Brain microvascular endothelial cell (primary cell): ENCODE measurements at regions of chr4 and their contacts with region 1.

Region 1: DNA sequence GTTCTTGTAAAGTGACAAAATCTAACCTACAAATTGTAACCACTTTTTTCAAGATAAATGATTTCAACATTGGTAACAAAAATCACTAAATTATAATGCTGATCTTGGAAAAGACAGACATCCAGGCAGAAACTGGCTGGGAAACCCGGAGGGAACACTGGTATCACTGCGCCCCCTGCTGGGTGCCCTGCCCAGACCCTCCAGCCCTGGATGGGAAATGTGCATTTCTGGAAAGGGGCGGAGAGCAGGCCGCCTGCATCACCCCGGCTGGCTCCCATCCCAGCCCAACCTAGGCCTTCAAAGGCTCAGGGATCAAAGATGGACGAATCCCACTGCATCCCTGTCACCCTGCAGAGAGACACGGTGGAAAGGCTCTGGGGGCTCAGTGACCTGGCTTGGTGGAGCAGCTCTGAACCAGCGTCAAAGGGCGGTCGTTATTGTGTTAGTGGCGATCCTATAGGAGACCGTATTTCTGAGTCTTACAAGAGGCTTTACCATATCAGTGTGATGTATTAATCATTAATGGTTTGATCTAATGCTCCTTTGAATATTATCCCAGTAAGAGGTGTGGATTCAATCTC is 37.3 kb downstream of the ACOX3 start:
- DNase-seq: peak; percentile 77
- H3K4me3 ChIP-seq: no peak overlapping the region
- H3K27ac ChIP-seq: no peak overlapping the region
- H3K27me3 ChIP-seq: no peaks in the 10 kb centered on the region
- CTCF ChIP-seq: peak; percentile 97

Region 2: GRCh38 chr4:8267077-8267476 is 136.2 kb before region 1 on chr4:
- in situ Hi-C with region 1: loop called (anchors 25 kb)
- DNase-seq: no peak
- H3K4me3 ChIP-seq: no peak overlapping the region
- H3K27ac ChIP-seq: no peak overlapping the region
- H3K27me3 ChIP-seq: peaks cover 6% of the 10 kb centered on the region
- CTCF ChIP-seq: peak; percentile 74